Endothelial cell of umbilical vein (primary cell): ENCODE measurements at regions of chr15 and their contacts with region 1.

Region 1: DNA sequence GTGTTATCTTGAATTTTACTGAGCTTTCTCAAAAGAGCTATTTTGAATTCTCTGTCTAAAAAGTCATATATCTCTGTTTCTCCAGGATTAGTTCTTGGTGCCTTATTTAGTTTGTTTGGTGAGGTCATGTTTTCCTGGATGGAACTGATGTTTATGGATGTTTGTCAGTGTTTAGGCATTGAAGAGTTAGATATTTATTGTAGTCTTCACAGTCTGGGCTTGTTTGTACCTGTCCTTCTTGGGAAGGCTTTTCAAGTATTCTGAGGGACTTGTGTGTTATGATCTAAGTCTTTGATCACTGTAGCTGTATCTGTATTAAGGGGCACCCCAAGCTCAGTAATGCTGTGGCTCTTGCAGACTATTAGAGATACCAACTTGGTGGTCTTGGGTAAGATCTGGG is 10.6 kb upstream of the RAD51 start:
- DNase-seq: no peak
- H3K4me3 ChIP-seq: no peak overlapping the region
- H3K27ac ChIP-seq: no peak overlapping the region
- H3K4me1 ChIP-seq: no peaks in the 10 kb centered on the region
- H3K27me3 ChIP-seq: no peaks in the 10 kb centered on the region
- CTCF ChIP-seq: no peak
- POLR2A ChIP-seq: no peak

Region 2: GRCh38 chr15:40569139-40569953 is 115.0 kb before region 1 on chr15 and contains the start of gene RPUSD2:
- CTCF ChIA-PET with region 1: no interaction called
- POLR2A ChIA-PET with region 1: no interaction called
- dilution Hi-C with region 1: no loop called
- intact Hi-C with region 1: no loop called
- DNase-seq: peak; percentile 92
- H3K4me3 ChIP-seq: peak within 1 kb of the TSS; percentile 60 to 78 (median 64)
- H3K27ac ChIP-seq: peak within 1 kb of the TSS; percentile 6
- H3K4me1 ChIP-seq: peaks cover 18% of the 10 kb centered on the region
- H3K27me3 ChIP-seq: no peaks in the 10 kb centered on the region
- CTCF ChIP-seq: no peak
- POLR2A ChIP-seq: peak; percentile 91
- total RNA-seq, gene RPUSD2: 10.6 and 11.4 TPM in 2 replicates

Region 3: GRCh38 chr15:40694688-40695468 is 10.5 kb after region 1 on chr15 and contains the start of gene RAD51:
- CTCF ChIA-PET with region 1: interaction called, 9 read pairs
- POLR2A ChIA-PET with region 1: no interaction called
- dilution Hi-C with region 1: no loop called
- intact Hi-C with region 1: loop called (anchors 2 kb)
- DNase-seq: peak; percentile 95
- H3K4me3 ChIP-seq: peak within 1 kb of the TSS; percentile 69 to 96 (median 92)
- H3K27ac ChIP-seq: peak within 1 kb of the TSS; percentile 86
- H3K4me1 ChIP-seq: peaks cover 13% of the 10 kb centered on the region
- H3K27me3 ChIP-seq: no peaks in the 10 kb centered on the region
- CTCF ChIP-seq: no peak
- POLR2A ChIP-seq: peak; percentile 63
- total RNA-seq, gene RAD51: 29.7 and 30.9 TPM in 2 replicates

Region 4: GRCh38 chr15:40743921-40744814 is 59.8 kb after region 1 on chr15:
- CTCF ChIA-PET with region 1: no interaction called
- POLR2A ChIA-PET with region 1: no interaction called
- dilution Hi-C with region 1: no loop called
- intact Hi-C with region 1: loop called (anchors 1 kb)
- DNase-seq: no peak
- H3K4me3 ChIP-seq: no peak overlapping the region
- H3K27ac ChIP-seq: no peak overlapping the region
- H3K4me1 ChIP-seq: no peaks in the 10 kb centered on the region
- H3K27me3 ChIP-seq: no peaks in the 10 kb centered on the region
- CTCF ChIP-seq: no peak
- POLR2A ChIP-seq: no peak